Activated CD8-positive, alpha-beta T cell treated with anti-CD3 and anti-CD28 coated beads, Interleukin-2, amount 10 ng/mL, durations not matched to agents 7 days and 5 days (primary cell): ENCODE measurements at regions of chr2 and their contacts with region 1.

Region 1: GRCh38 chr2:174465327-174465726 is 21.5 kb downstream of the GPR155 start:
- DNase-seq: no peak
- ATAC-seq: no peak
- H3K4me3 Mint-ChIP-seq: no peak overlapping the region
- H3K27ac Mint-ChIP-seq: no peak overlapping the region
- H3K4me1 Mint-ChIP-seq: no peaks in the 10 kb centered on the region
- H3K27me3 Mint-ChIP-seq: no peaks in the 10 kb centered on the region

Region 2: DNA sequence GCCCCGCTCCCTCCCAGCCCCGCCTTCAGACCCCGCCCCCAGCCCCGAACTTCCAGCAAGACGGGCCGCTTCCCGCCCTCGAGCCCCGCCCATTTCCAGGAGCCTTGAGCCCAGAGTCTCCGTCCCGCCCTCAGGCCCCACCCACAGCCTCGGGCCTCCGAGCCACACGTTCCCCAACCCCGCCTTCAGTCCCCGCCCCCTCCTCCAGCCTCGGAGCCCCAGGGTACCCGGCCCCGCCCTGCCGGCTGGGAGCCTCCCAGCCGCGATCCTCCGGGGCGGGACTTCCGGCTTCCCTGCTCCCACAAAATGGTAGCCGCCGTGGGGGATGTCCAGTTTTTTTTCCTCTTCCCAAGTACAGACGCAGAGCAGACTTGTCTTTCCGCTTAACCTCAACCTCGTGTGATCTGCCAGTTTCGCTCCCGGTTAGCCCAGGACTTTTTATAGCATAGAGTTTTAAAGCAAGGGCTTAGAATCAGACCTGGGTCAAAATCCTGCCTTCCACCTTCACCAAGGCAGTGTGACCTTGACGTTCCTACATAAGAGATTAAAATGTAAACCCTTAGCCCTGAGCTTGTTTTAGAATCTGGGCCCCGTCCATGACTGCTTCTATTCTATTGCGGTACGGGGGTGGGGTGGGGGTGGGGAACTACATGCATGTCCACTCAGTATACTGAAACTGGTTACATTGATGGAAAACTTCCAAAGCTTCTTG is 21.9 kb after region 1 on chr2:
- CTCF ChIA-PET with region 1: interaction called, 52 read pairs
- POLR2A ChIA-PET with region 1: interaction called, 4 read pairs
- DNase-seq: peak; percentile 100
- ATAC-seq: peak; percentile 89
- H3K4me3 Mint-ChIP-seq: peak overlapping the region; percentile 95
- H3K27ac Mint-ChIP-seq: peak overlapping the region; percentile 91
- H3K4me1 Mint-ChIP-seq: peaks cover 69% of the 10 kb centered on the region
- H3K27me3 Mint-ChIP-seq: no peaks in the 10 kb centered on the region

Region 3: GRCh38 chr2:174522553-174522952 is 57.2 kb after region 1 on chr2:
- CTCF ChIA-PET with region 1: interaction called, 80 read pairs
- POLR2A ChIA-PET with region 1: interaction called, 3 read pairs
- DNase-seq: no peak
- ATAC-seq: no peak
- H3K4me3 Mint-ChIP-seq: no peak overlapping the region
- H3K27ac Mint-ChIP-seq: no peak overlapping the region
- H3K4me1 Mint-ChIP-seq: peaks cover 18% of the 10 kb centered on the region
- H3K27me3 Mint-ChIP-seq: peaks cover 8% of the 10 kb centered on the region

Region 4: DNA sequence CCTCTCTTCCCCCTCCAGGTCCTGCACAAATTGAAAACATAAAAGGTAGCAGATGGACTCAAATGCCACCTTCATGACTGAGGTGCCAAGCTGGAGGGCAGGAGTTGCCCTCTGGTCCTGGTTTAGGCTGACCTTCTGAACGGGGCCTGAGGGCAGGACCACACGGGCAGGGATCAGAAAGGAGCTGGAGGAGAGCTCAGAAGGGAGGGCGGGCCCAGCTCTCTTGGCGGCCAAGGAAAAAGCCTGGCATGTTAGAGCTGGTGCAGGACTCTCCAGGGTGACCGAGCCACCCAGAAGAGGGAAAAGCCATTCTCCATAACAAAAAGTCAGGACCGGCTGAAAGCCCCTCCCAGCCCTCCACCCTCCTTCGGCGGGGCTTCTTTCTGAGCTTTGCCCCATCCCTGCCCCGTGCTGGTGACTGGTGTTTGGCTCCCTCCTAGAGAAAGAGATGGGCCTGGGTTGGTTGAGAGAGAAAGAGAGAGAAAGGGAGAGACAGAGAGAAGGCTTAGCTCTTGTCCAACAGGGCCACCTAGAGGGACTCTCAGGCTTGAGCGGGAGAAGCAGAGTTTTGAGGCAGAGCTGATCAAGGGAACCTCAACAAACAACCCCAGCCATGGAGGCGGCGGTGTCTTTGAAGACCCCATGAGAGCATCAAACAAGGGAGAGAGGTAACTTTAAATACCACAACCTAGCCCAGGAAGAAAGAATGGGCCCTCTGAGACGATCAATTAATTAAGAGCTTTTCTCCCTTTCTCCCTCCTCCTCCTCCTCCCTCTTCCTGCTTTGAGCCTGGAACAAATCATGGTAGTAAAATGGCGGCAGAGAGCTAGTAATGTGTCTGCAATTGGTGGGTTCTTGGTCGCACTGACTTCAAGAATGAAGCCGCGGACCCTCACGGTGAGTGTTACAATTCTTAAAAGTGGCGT is 81.5 kb after region 1 on chr2:
- CTCF ChIA-PET with region 1: interaction called, 166 read pairs
- POLR2A ChIA-PET with region 1: interaction called, 6 read pairs
- DNase-seq: peak; percentile 66
- ATAC-seq: peak; percentile 87
- H3K4me3 Mint-ChIP-seq: no peak overlapping the region
- H3K27ac Mint-ChIP-seq: peak overlapping the region; percentile 32
- H3K4me1 Mint-ChIP-seq: peaks cover 13% of the 10 kb centered on the region
- H3K27me3 Mint-ChIP-seq: peaks cover 3% of the 10 kb centered on the region

Region 5: DNA sequence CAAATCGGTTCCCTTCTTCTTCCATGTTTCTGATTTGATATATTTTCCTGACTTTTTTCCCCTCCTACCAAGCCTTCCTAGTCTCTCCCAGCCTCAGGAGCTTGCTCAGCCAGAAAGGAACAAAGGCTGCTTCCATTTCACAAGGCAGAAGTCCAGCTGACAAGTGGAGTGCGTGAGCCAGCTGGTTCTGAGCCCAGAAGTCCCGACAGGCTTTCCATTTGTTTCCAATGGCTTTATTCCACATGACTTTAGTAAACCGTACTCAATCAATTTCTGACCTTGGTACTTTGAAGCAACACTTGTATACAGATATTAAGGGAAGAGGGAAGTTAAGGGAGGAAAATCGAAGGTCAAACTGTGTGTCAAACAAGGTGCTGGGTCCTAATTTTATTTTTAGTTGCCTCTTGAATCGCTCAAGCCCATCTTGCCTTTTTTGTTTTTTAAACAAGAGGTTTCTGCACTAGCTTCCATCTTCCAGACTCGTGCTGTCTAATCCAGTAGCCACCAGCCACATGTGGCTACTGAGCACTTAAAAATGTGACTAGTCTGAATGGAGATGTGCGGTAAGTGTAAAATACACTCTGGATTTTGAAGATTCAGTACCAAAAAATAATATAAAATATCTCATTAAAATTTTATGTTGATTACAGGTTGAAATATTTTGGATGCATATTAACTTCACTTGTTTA is 96.1 kb after region 1 on chr2:
- CTCF ChIA-PET with region 1: interaction called, 30 read pairs
- POLR2A ChIA-PET with region 1: interaction called, 3 read pairs
- DNase-seq: no peak
- ATAC-seq: no peak
- H3K4me3 Mint-ChIP-seq: no peak overlapping the region
- H3K27ac Mint-ChIP-seq: no peak overlapping the region
- H3K4me1 Mint-ChIP-seq: peaks cover under 1% of the 10 kb centered on the region
- H3K27me3 Mint-ChIP-seq: no peaks in the 10 kb centered on the region

Region 6: GRCh38 chr2:174603280-174603679 is 138.0 kb after region 1 on chr2:
- CTCF ChIA-PET with region 1: interaction called, 11 read pairs
- POLR2A ChIA-PET with region 1: no interaction called
- DNase-seq: peak; percentile 68
- ATAC-seq: peak; percentile 54
- H3K4me3 Mint-ChIP-seq: no peak overlapping the region
- H3K27ac Mint-ChIP-seq: no peak overlapping the region
- H3K4me1 Mint-ChIP-seq: peaks cover 88% of the 10 kb centered on the region
- H3K27me3 Mint-ChIP-seq: no peaks in the 10 kb centered on the region

Region 7: DNA sequence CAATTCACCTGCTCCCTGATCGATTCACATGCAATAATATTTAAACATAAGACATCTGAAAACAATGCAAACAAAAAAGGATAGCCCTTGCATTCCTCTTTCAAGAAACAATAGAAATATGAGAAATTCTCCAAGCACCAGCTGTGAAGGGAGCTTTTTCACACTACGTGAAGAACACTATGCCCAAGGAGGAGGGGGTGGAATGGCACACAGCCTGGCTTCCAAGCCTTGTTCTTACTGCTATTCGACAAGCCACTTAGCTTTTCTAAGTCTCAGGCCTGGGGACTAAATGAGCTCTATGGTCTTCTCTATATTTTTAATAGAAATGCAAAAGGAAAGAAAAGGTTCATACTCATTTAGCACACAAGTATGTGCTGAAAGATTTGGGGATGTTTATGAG is 391.1 kb after region 1 on chr2:
- CTCF ChIA-PET with region 1: no interaction called
- POLR2A ChIA-PET with region 1: no interaction called
- DNase-seq: no peak
- ATAC-seq: no peak
- H3K4me3 Mint-ChIP-seq: no peak overlapping the region
- H3K27ac Mint-ChIP-seq: no peak overlapping the region
- H3K4me1 Mint-ChIP-seq: no peaks in the 10 kb centered on the region
- H3K27me3 Mint-ChIP-seq: peaks cover 3% of the 10 kb centered on the region